ENCODE measurements at regions of chr2 and their contacts with region 1.

Region 1: DNA sequence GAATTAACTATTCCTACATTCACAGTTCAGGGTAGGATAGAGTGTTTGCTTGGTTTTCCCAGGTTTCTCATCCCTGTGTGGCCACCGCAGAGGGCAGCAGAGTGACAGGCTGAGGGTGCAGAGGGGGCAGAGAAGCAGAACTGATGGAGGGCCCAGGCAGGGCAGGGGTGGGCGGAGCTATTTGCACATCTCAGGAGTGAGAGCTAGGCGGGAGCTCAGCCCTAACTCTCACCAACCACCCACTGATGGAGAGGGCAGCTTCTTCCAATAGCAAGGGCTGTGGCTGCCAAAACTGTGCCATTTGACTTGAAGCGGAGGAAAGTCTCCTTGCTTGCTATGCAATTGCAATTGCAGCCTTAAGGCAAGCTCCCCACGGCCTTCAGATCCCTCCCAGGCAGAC is 12.0 kb upstream of the DARS1 start:
- DNase-seq: peak; percentile 82
- ATAC-seq: peak; percentile 100
- H3K4me3 Mint-ChIP-seq: no peak overlapping the region
- H3K27ac Mint-ChIP-seq: no peak overlapping the region
- H3K4me1 Mint-ChIP-seq: peaks cover 8% of the 10 kb centered on the region
- H3K27me3 Mint-ChIP-seq: no peaks in the 10 kb centered on the region
- CTCF ChIP-seq: no peak

Region 2: DNA sequence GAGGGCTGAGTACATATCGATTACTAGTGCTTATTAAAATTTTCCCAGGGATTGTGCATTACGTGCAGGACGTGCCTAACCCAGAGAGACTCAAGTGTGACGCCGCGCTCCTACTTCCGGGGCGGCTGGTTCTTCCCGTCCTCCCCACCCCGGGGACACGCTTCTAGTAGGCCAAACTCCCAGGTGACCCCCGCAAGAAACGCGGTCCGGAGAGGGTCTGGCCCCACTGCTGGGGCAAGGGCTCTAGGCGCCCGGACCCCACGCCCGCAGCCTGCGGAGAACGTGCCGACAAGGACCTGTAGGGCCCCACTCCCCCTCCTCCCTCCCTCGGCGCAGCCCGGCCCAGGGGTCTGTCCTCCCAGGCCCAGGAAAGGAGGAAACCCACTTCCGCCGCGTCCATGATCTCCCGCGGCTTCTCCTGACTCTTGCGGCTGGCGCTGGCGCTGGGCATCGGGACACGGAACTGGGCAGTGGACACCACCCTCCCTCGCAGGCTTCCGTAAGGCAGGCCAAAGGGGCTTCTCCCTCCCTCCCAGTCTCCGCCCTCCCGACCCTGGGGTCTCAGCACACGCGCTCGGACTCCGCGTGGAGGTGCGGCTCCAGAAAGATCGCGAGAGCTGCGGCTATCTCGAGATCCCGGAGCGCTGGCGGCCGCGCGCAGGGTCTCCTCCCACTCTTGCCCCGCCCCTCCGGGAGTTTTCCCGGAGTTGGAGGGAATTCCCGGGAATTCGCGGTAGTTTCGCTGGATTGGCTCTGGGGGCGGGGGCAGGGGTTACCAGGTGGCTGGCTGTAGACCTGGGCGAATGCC is 12.2 kb before region 1 on chr2 and contains the start of gene DARS1:
- CTCF ChIA-PET with region 1: interaction called, 15 read pairs
- POLR2A ChIA-PET with region 1: no interaction called
- DNase-seq: peak; percentile 96
- ATAC-seq: peak; percentile 95
- H3K4me3 Mint-ChIP-seq: peak within 1 kb of the TSS; percentile 82
- H3K27ac Mint-ChIP-seq: peak within 1 kb of the TSS; percentile 97
- H3K4me1 Mint-ChIP-seq: peaks cover 25% of the 10 kb centered on the region
- H3K27me3 Mint-ChIP-seq: no peaks in the 10 kb centered on the region; the same call in 1 of the 2 replicates
- CTCF ChIP-seq: no peak
- total RNA-seq, gene DARS1: 80.9 to 95.5 TPM (median 91.7 TPM) in 3 replicates

Region 3: GRCh38 chr2:136025057-136025973 is 27.9 kb after region 1 on chr2:
- CTCF ChIA-PET with region 1: interaction called, 11 read pairs
- POLR2A ChIA-PET with region 1: interaction called, 3 read pairs
- DNase-seq: peak; percentile 89
- ATAC-seq: peak; percentile 94
- H3K4me3 Mint-ChIP-seq: peak overlapping the region; percentile 70
- H3K27ac Mint-ChIP-seq: peak overlapping the region; percentile 87
- H3K4me1 Mint-ChIP-seq: peaks cover 27% of the 10 kb centered on the region
- H3K27me3 Mint-ChIP-seq: peaks cover 6% of the 10 kb centered on the region; the same call in 1 of the 2 replicates
- CTCF ChIP-seq: no peak

Region 4: GRCh38 chr2:136117909-136118818 is 120.8 kb after region 1 on chr2 and contains the start of gene CXCR4:
- CTCF ChIA-PET with region 1: interaction called, 13 read pairs
- POLR2A ChIA-PET with region 1: no interaction called
- DNase-seq: peak; percentile 90
- ATAC-seq: peak; percentile 80
- H3K4me3 Mint-ChIP-seq: peak within 1 kb of the TSS; percentile 85
- H3K27ac Mint-ChIP-seq: peak within 1 kb of the TSS; percentile 69
- H3K4me1 Mint-ChIP-seq: peaks cover 39% of the 10 kb centered on the region
- H3K27me3 Mint-ChIP-seq: peaks cover 75% of the 10 kb centered on the region
- CTCF ChIP-seq: no peak
- total RNA-seq, gene CXCR4: 1.3 to 2.1 TPM (median 1.9 TPM) in 3 replicates

Region 5: DNA sequence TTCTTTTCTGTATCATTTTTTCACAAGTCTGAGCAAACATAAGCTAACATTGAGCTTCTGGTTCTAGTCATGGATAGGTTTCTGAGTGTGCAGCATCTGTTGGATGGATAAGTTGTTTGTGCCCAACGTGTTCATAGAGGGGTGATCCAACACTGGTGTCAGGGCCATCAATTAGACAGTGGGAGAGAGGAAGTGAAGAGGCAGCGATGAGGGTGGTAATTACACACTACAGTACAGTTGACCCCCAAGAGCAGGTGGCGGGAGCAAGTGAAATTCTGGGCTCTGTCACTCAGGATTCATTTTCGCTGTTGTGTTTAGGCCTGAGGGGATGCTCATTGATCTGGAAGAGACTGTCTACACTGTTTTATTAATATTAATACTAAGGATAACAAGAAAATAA is 300.6 kb after region 1 on chr2:
- CTCF ChIA-PET with region 1: no interaction called
- POLR2A ChIA-PET with region 1: no interaction called
- DNase-seq: no peak
- ATAC-seq: no peak
- H3K4me3 Mint-ChIP-seq: no peak overlapping the region
- H3K27ac Mint-ChIP-seq: no peak overlapping the region
- H3K4me1 Mint-ChIP-seq: no peaks in the 10 kb centered on the region
- H3K27me3 Mint-ChIP-seq: no peaks in the 10 kb centered on the region
- CTCF ChIP-seq: no peak

Region 6: DNA sequence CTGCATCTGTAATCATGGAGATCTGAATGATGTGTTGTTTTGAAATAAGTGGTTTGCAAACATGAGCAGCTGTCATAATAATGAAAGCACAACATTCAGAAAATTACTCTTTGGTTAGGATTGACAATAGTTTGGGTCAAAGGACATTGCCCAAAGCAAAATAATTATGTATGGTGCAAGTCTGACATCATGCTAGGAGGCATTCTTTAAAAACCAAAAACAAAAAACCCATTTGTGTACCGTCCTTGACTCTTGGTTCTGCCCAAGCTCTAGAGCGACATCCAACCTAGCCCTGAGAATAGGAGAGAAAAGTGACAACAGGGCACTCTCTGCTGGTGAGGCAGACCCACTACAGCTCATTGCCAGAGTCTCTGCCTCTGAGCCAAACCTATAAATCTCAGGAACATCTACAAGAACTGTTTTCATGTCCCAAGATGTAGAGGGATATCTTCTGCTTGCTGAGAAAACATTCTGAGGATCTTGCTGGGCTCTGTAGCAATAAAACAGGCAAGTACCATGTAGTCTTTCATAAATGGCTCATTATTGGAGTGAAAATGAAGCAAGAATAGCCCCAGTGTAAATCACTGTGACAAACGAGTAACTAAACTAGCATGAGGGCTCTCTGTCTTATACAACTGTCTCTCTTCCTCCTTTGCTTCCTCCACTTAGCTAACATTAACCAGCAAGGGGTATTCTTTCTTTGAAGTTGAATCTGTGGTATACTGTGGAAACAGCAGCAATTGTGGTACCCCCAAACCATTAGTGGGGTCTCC is 387.3 kb after region 1 on chr2:
- CTCF ChIA-PET with region 1: interaction called, 26 read pairs
- POLR2A ChIA-PET with region 1: no interaction called
- DNase-seq: peak; percentile 39
- ATAC-seq: peak; percentile 98
- H3K4me3 Mint-ChIP-seq: no peak overlapping the region
- H3K27ac Mint-ChIP-seq: no peak overlapping the region
- H3K4me1 Mint-ChIP-seq: peaks cover 15% of the 10 kb centered on the region; the same call in 1 of the 2 replicates
- H3K27me3 Mint-ChIP-seq: no peaks in the 10 kb centered on the region
- CTCF ChIP-seq: peak; percentile 53

Measured in WTC11 (cell line).